Sigmoid colon (tissue), 7 donors: ENCODE measurements at regions of chr1 and their contacts with region 1.

Region 1: GRCh38 chr1:28266920-28267322 is 7.6 kb downstream of the SESN2 start:
- DNase-seq: peak; percentile 54
- H3K4me3 ChIP-seq: no peak overlapping the region
- H3K27ac ChIP-seq: no peak overlapping the region
- H3K4me1 ChIP-seq: peaks cover 0 to 5% (median 2%) of the 10 kb centered on the region in 4 donors
- H3K27me3 ChIP-seq: no peaks in the 10 kb centered on the region
- CTCF ChIP-seq: no peak
- EP300 ChIP-seq: no peak
- POLR2A ChIP-seq: no peak

Region 2: GRCh38 chr1:27862651-27863537 is 404.0 kb before region 1 on chr1:
- intact Hi-C with region 1: no loop called
- DNase-seq: peak; percentile 78
- H3K4me3 ChIP-seq: no peak overlapping the region
- H3K27ac ChIP-seq: peak overlapping the region; percentile 49 to 65 (median 58)
- H3K4me1 ChIP-seq: peaks cover 0 to 9% (median 4%) of the 10 kb centered on the region in 4 donors
- H3K27me3 ChIP-seq: no peaks in the 10 kb centered on the region
- CTCF ChIP-seq: no peak
- EP300 ChIP-seq: peak in 1 of 4 donors; percentile 23
- POLR2A ChIP-seq: no peak

Region 3: GRCh38 chr1:27940297-27940696 is 326.6 kb before region 1 on chr1:
- intact Hi-C with region 1: no loop called
- DNase-seq: no peak
- H3K4me3 ChIP-seq: no peak overlapping the region
- H3K27ac ChIP-seq: no peak overlapping the region
- H3K4me1 ChIP-seq: no peaks in the 10 kb centered on the region
- H3K27me3 ChIP-seq: peaks cover 0 to 12% (median 11%) of the 10 kb centered on the region in 3 donors
- CTCF ChIP-seq: no peak
- EP300 ChIP-seq: no peak
- POLR2A ChIP-seq: no peak

Region 4: GRCh38 chr1:28232558-28233263 is 34.2 kb before region 1 on chr1 and contains the start of gene DNAJC8:
- intact Hi-C with region 1: no loop called
- DNase-seq: peak; percentile 98
- H3K4me3 ChIP-seq: peak within 1 kb of the TSS; percentile 57 to 99 (median 90)
- H3K27ac ChIP-seq: peak within 1 kb of the TSS; percentile 79 to 88 (median 82)
- H3K4me1 ChIP-seq: peaks cover 0 to 49% (median 40%) of the 10 kb centered on the region in 4 donors
- H3K27me3 ChIP-seq: no peaks in the 10 kb centered on the region
- CTCF ChIP-seq: no peak
- EP300 ChIP-seq: peak in 1 of 4 donors; percentile 66
- POLR2A ChIP-seq: peak; percentile 72 to 85
- total RNA-seq, gene DNAJC8: 87.8 to 94.3 (median 94.2) TPM

Region 5: DNA sequence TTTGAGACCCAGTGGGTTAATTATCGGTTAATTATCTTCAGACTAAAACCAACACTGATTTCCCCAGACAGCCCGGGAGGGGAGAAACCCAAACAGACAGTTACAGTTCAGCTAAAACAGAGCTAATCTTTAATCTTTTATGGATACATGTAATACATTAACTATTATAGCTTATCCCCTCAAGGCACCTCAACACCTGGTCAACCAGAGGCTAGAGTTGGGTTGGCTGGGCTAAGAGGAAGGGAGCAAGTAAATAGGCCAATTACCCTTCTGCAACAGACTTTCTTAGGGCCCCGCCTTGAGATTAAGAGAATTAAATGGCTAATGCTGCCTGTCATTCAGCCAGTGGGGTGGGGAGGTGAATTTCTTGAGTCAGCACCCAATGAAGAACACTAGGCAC is 55.3 kb after region 1 on chr1:
- intact Hi-C with region 1: loop called (anchors 5 kb)
- DNase-seq: no peak
- H3K4me3 ChIP-seq: no peak overlapping the region
- H3K27ac ChIP-seq: no peak overlapping the region
- H3K4me1 ChIP-seq: no peaks in the 10 kb centered on the region
- H3K27me3 ChIP-seq: peaks cover 0 to 5% (median 0%) of the 10 kb centered on the region in 3 donors
- CTCF ChIP-seq: no peak
- EP300 ChIP-seq: no peak
- POLR2A ChIP-seq: no peak